Caco-2 (cell line): ENCODE measurements at regions of chr2 and their contacts with region 1.

Region 1: DNA sequence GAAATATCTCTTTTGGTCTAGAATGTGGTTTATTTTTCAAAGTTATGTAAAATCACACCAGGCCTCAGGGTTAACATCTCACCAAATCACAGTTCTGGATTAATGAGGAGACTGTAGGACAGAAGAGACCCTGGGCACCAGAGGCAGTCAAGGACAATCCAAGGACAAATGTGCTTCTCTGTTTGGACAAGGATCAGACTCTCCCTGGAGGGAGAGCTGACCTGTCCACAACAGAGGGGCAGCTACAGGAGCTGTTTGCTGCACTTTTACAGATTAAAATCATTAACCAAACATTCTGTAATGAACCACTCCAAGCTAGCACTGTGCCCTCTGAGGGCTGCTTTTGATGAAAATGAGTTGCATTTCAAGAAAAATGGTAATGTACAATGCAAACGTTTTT is 690.6 kb upstream of the SLC8A1 start:
- DNase-seq: no peak
- H3K4me3 ChIP-seq: no peak overlapping the region
- H3K4me3 Mint-ChIP-seq: no peak overlapping the region
- H3K27ac Mint-ChIP-seq: no peak overlapping the region
- H3K4me1 ChIP-seq: peaks cover 6% of the 10 kb centered on the region; the same call in 1 of the 2 replicates
- H3K4me1 Mint-ChIP-seq: peaks cover 8% of the 10 kb centered on the region
- H3K27me3 ChIP-seq: no peaks in the 10 kb centered on the region
- H3K27me3 Mint-ChIP-seq: peaks cover 4% of the 10 kb centered on the region
- CTCF ChIP-seq: no peak

Region 2: DNA sequence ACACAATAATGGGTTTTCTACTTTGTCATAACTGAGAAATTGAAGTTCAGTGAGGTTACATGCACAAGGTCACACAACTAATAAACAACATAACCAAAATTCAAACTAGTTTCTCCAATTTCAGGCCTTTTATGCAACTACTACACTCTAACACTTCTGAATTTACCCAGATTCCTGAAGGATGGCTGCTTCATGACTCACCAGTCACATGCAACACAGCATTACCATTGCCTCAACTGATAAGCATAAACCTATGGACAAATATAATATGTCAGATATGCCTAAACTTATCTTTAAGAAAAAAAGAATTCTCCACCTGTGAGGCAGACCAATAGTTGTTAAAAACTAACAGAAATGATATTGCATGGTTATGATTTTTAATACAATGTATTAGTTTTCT is 104.1 kb before region 1 on chr2:
- CTCF ChIA-PET with region 1: no interaction called
- POLR2A ChIA-PET with region 1: no interaction called
- intact Hi-C with region 1: loop called (anchors 5 kb)
- DNase-seq: peak; percentile 18 to 38
- H3K4me3 ChIP-seq: no peak overlapping the region
- H3K4me3 Mint-ChIP-seq: no peak overlapping the region
- H3K27ac Mint-ChIP-seq: peak overlapping the region; percentile 94
- H3K4me1 ChIP-seq: peaks cover 34% of the 10 kb centered on the region
- H3K4me1 Mint-ChIP-seq: peaks cover 33% of the 10 kb centered on the region
- H3K27me3 ChIP-seq: no peaks in the 10 kb centered on the region
- H3K27me3 Mint-ChIP-seq: no peaks in the 10 kb centered on the region
- CTCF ChIP-seq: no peak

Region 3: GRCh38 chr2:41127351-41127750 is 15.1 kb before region 1 on chr2:
- CTCF ChIA-PET with region 1: no interaction called
- POLR2A ChIA-PET with region 1: no interaction called
- intact Hi-C with region 1: no loop called
- DNase-seq: no peak
- H3K4me3 ChIP-seq: no peak overlapping the region
- H3K4me3 Mint-ChIP-seq: no peak overlapping the region
- H3K27ac Mint-ChIP-seq: no peak overlapping the region
- H3K4me1 ChIP-seq: peaks cover 31% of the 10 kb centered on the region
- H3K4me1 Mint-ChIP-seq: peaks cover 20% of the 10 kb centered on the region
- H3K27me3 ChIP-seq: no peaks in the 10 kb centered on the region
- H3K27me3 Mint-ChIP-seq: no peaks in the 10 kb centered on the region
- CTCF ChIP-seq: no peak

Region 4: GRCh38 chr2:41441627-41442357 is 299.3 kb after region 1 on chr2:
- CTCF ChIA-PET with region 1: no interaction called
- POLR2A ChIA-PET with region 1: no interaction called
- intact Hi-C with region 1: no loop called
- DNase-seq: no peak
- H3K4me3 ChIP-seq: no peak overlapping the region
- H3K4me3 Mint-ChIP-seq: no peak overlapping the region
- H3K27ac Mint-ChIP-seq: no peak overlapping the region
- H3K4me1 ChIP-seq: no peaks in the 10 kb centered on the region
- H3K4me1 Mint-ChIP-seq: no peaks in the 10 kb centered on the region
- H3K27me3 ChIP-seq: no peaks in the 10 kb centered on the region
- H3K27me3 Mint-ChIP-seq: no peaks in the 10 kb centered on the region
- CTCF ChIP-seq: no peak